H1 (cell line): ENCODE measurements at regions of chr12 and their contacts with region 1.

Region 1: DNA sequence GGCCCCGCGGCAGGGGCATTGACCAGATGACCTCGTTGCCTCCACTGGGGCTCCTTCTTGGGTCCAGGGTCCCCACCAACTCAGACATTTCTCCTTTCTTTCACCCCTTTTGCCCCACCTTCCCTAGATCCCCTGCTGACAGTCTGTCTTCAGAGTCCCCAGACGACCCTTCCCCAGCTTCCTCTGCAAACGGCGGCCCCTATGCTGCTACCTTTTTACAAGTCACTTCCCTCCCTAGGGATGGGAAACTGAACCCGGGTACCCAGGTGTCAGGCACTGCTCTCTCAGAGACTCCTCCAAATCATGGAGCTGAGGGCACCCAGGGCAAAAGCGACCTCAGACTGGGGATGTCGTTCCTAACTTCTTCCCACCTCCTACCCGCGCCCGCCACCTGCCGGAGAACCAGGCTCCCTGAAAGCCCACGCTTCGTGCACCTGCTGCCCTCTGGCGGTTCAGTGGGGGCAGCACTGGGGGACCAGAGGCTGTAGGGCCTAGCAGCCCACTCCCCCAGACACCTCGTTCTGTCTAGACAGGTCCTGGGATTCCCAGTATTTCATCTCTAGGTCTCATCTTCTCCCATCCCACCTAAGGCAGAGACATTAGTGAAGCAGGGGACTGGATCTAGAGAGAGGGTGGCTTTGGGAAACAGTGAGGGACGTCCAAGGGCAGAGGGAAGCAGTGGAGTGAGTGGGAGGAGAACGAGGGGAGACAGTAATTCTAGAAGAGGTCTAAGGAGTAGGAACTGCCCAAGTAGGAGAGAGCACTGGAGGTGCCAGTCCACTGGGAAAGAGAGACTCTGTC is 4.9 kb downstream of the ZNF385A start:
- DNase-seq: peak in 1 of 2 experiments; percentile 99
- H3K4me3 ChIP-seq: peak overlapping the region; percentile 30 to 54 (median 38); a peak in 6 of 8 replicates
- H3K27ac ChIP-seq: no peak overlapping the region
- H3K4me1 ChIP-seq: peaks cover 3 to 17% (median 12%) of the 10 kb centered on the region in 4 experiments
- H3K27me3 ChIP-seq: peaks cover 0 to 3% (median 1%) of the 10 kb centered on the region in 4 experiments; a peak in 2 of 7 replicates
- CTCF ChIP-seq: peak; percentile 100
- EP300 ChIP-seq: no peak
- POLR2A ChIP-seq: no peak
- RAD21 ChIP-seq: peak; percentile 84 to 90

Region 2: DNA sequence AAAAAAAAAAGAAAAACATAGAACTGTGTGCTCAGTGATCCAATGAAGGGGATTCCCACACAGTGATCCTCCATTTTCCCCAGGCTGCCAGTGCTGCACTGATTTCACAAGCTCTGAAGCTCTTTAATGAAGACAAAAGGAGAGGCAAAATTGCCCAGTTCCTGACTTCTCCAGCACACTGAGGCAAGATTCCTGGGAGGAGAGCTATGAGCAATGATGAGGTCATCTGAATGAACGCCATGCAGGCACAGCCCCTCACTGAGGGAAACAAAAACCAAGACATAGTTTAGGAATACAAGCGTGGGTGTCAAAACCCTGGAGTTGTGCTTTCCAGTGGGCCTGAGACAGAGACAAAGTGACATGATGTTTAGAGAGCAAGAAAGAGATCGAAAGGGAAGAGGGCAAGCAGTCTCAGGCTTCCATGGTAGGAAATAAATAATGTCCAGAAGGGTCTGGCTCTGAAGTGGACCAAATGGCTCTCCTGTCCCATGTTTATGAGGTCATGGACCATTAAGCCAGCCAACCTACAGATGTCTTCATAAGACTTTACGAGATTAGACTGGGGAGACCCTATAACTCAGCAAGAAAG is 149.9 kb before region 1 on chr12:
- CTCF ChIA-PET with region 1: interaction called, 11 read pairs
- POLR2A ChIA-PET with region 1: no interaction called
- DNase-seq: no peak
- H3K4me3 ChIP-seq: no peak overlapping the region
- H3K27ac ChIP-seq: 0 out of 2 replicates have a peak overlapping the region, but pooled peaks have one; percentile 0
- H3K4me1 ChIP-seq: no peaks in the 10 kb centered on the region
- H3K27me3 ChIP-seq: no peaks in the 10 kb centered on the region
- CTCF ChIP-seq: no peak
- EP300 ChIP-seq: no peak
- POLR2A ChIP-seq: no peak
- RAD21 ChIP-seq: no peak

Region 3: DNA sequence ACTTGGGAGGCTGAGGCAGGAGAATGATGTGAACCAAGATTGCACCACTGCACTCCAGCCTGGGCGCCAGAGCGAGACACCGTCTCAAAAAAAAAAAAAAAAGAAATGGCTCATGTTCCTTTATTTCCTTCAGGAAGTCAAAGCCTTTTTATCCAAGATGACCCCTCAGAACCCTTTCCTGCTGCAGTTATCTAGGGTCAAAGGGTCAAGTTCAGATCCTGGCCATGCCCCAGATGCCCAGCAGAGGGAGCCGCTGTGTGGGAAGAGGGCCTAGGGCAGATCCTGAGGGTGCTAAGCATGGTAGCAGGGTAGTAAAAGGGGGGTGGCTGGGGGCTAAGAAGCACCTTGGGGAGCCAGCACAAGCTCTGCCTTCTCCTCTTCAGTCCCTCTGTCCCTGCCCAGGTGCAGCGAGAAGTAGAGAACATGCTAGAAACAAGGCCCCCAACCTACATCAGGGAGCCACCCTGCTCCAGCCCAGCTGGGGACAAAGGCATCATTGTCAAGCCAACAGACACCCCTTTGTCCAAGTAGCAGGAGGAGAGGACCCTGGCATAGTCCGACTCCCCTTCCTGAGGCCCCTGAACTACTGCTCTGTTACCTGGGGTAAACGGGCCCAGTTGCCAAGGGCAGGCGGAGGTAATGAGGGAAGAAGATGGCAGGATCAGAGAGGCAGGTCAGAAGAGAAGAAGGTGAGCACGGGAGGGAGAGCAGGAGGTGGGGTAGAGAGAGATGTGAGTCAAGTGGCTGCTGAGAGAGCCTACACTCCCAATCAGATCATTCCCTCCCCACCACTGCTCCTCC is 85.2 kb before region 1 on chr12:
- CTCF ChIA-PET with region 1: interaction called, 51 read pairs
- POLR2A ChIA-PET with region 1: interaction called, 4 read pairs
- DNase-seq: peak in 1 of 2 experiments; percentile 94
- H3K4me3 ChIP-seq: no peak overlapping the region
- H3K27ac ChIP-seq: no peak overlapping the region
- H3K4me1 ChIP-seq: peaks cover 0 to 2% (median 0%) of the 10 kb centered on the region in 4 experiments; a peak in 1 of 7 replicates
- H3K27me3 ChIP-seq: peaks cover 0 to 4% (median 0%) of the 10 kb centered on the region in 4 experiments; a peak in 1 of 7 replicates
- CTCF ChIP-seq: peak; percentile 91 to 95 (median 93)
- EP300 ChIP-seq: no peak
- POLR2A ChIP-seq: no peak
- RAD21 ChIP-seq: peak; percentile 81 to 92

Region 4: DNA sequence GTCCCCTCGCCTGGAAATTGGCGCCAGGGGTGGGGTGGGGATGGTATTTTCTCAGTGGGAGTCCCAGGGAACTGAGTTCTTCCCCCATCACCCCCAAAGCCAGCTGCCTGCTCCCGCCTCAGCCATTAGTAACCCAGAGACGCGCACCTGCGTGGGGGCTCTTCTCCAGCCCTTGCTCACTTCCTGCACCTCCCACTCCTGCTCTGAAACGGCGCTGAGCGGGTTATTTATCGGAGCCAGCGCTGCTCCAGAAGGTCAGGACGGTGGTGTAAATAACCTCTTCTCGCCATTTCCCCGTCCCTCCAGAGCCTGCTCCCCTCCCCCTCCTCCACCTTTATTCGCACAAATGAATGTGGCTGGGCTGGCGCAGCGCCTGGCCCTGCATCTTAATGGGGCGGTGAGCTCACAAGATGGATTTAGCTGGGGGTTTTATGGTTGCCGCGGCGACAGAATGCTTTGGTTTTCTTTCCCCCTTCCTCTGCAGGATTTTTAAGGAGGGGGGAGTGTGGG is 27.5 kb before region 1 on chr12:
- CTCF ChIA-PET with region 1: interaction called, 100 read pairs
- POLR2A ChIA-PET with region 1: interaction called, 14 read pairs
- DNase-seq: peak; percentile 50 to 70
- H3K4me3 ChIP-seq: peak overlapping the region; percentile 44 to 64 (median 62)
- H3K27ac ChIP-seq: peak overlapping the region; percentile 61
- H3K4me1 ChIP-seq: peaks cover 27 to 69% (median 33%) of the 10 kb centered on the region in 4 experiments
- H3K27me3 ChIP-seq: peaks cover 0 to 9% (median 4%) of the 10 kb centered on the region in 4 experiments; a peak in 3 of 7 replicates
- CTCF ChIP-seq: no peak
- EP300 ChIP-seq: no peak
- POLR2A ChIP-seq: peak in 1 of 2 experiments; percentile 41; a peak in 1 of 3 replicates
- RAD21 ChIP-seq: no peak

Region 5: GRCh38 chr12:54398995-54399793 is 19.6 kb after region 1 on chr12:
- CTCF ChIA-PET with region 1: interaction called, 168 read pairs
- POLR2A ChIA-PET with region 1: interaction called, 3 read pairs
- DNase-seq: peak in 1 of 2 experiments; percentile 98
- H3K4me3 ChIP-seq: no peak overlapping the region
- H3K27ac ChIP-seq: no peak overlapping the region
- H3K4me1 ChIP-seq: no peaks in the 10 kb centered on the region
- H3K27me3 ChIP-seq: no peaks in the 10 kb centered on the region
- CTCF ChIP-seq: peak; percentile 97 to 100 (median 99)
- EP300 ChIP-seq: no peak
- POLR2A ChIP-seq: no peak
- RAD21 ChIP-seq: peak; percentile 96 to 97

Region 6: GRCh38 chr12:54439521-54440255 is 60.1 kb after region 1 on chr12:
- CTCF ChIA-PET with region 1: interaction called, 23 read pairs
- POLR2A ChIA-PET with region 1: no interaction called
- DNase-seq: no peak
- H3K4me3 ChIP-seq: no peak overlapping the region
- H3K27ac ChIP-seq: no peak overlapping the region
- H3K4me1 ChIP-seq: no peaks in the 10 kb centered on the region
- H3K27me3 ChIP-seq: peaks cover 1 to 10% (median 9%) of the 10 kb centered on the region in 4 experiments; a peak in 5 of 7 replicates
- CTCF ChIP-seq: peak in 2 of 3 experiments; percentile 76 to 89; a peak in 3 of 4 replicates
- EP300 ChIP-seq: no peak
- POLR2A ChIP-seq: no peak
- RAD21 ChIP-seq: peak; percentile 94 to 95

Region 7: DNA sequence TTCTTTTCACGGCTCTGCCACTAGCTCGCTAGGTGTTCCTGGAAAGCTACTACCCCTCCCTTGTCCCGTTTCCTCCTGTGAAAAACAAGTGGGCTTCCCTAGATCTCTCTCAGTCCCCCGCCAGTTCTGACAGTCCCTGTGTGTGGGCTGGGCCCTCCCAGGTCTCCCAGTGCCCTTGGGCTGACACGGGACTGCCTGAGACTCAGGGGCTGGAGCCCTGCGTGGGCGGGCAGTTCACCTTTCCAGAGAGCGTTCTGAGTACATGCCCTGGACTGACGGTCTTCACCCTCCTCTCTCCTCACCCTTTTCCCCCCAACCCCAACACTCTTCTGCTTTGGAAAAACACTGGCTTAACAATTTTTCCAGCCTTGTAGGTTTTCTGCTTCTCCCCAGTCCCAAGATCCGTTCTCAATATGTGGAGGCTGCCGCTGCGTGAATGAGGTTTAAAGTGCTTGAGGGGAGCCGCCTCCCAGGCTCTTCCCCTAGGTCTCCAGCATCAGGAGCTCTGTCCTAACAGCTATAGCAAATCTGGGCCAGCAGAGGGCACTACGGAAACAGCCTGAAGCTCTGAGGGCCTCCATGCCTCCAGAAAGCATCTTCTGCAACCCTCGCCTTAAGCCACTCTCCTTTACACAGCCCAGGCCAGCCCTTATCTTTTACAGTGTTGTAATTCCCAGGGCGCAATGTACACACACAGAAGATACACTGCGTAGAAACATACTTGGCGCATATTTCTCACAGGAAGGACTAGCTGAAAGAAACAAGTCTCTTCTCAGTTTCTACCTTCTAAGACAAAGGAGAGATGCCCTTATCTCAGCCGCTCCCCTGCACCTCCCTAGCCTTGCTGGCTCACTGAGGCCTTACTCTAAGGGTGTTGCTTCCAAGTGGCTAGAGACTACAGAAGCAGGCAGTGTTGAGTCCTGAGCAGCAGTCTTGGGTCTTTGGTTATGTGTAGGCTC is 279.0 kb after region 1 on chr12:
- CTCF ChIA-PET with region 1: no interaction called
- POLR2A ChIA-PET with region 1: no interaction called
- DNase-seq: peak; percentile 53 to 87
- H3K4me3 ChIP-seq: peak overlapping the region in 1 of 4 experiments; percentile 7; a peak in 1 of 8 replicates
- H3K27ac ChIP-seq: no peak overlapping the region
- H3K4me1 ChIP-seq: peaks cover 0 to 6% (median 1%) of the 10 kb centered on the region in 4 experiments; a peak in 5 of 7 replicates
- H3K27me3 ChIP-seq: peaks cover 0 to 2% (median 0%) of the 10 kb centered on the region in 4 experiments; a peak in 3 of 7 replicates
- CTCF ChIP-seq: peak; percentile 76 to 95 (median 88)
- EP300 ChIP-seq: no peak
- POLR2A ChIP-seq: no peak
- RAD21 ChIP-seq: peak; percentile 76 to 84

Region 8: GRCh38 chr12:54725233-54725843 is 345.7 kb after region 1 on chr12:
- CTCF ChIA-PET with region 1: no interaction called
- POLR2A ChIA-PET with region 1: no interaction called
- DNase-seq: no peak
- H3K4me3 ChIP-seq: no peak overlapping the region
- H3K27ac ChIP-seq: no peak overlapping the region
- H3K4me1 ChIP-seq: peaks cover 0 to 6% (median 4%) of the 10 kb centered on the region in 4 experiments; a peak in 3 of 7 replicates
- H3K27me3 ChIP-seq: no peaks in the 10 kb centered on the region
- CTCF ChIP-seq: peak in 2 of 3 experiments; percentile 50 to 56; a peak in 3 of 4 replicates
- EP300 ChIP-seq: no peak
- POLR2A ChIP-seq: no peak
- RAD21 ChIP-seq: peak; percentile 49 to 64